A549 (cell line): ENCODE measurements at regions of chr16 and their contacts with region 1.

Region 1: DNA sequence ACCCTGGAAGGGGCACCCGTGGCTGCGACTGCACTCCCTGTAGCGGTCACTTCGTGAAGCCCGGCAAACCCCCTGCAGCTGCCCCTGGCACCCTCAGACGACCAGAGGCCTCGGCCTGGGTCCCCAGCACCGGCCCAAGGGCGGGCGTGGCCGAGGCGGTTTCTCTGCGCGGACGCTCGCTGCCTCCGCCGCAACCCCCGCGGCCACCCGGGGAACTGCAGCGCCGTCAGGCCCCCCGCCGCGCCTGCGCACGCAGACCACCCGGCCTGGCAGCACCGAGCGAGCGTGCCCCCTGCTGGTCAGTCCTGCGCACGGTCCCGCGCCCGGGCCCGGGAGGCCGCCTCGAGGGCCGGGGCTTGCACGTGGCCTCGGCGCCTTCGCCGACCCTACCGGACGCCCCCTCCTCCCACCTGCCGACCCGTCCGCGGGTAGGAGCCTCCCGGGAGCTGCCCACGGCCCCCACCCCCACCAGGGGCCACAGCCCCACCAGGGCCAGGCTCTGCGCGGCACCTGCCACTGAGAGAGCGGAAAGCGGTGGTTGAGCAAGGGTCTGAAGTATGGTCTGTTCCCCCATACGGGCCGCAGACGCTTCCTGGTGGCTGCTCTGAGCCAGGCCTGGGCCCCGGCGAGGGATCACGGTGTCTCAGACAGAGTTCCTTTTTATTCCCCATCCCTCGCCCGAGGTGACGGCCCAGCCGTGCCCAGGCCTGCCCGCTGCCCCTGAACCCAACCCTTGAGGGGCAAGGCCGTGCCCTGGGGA is 11.5 kb upstream of the HS3ST6 start:
- DNase-seq: peak; percentile 82 to 88
- ATAC-seq: peak; percentile 82 to 84
- H3K4me3 ChIP-seq: peak overlapping the region; percentile 65
- H3K27ac ChIP-seq: peak overlapping the region; percentile 98 to 99
- H3K4me1 ChIP-seq: peaks cover 40% of the 10 kb centered on the region
- CTCF ChIP-seq: peak; percentile 97
- EP300 ChIP-seq: no peak
- POLR2A ChIP-seq: peak; percentile 39; the same call in 1 of the 2 replicates
- RAD21 ChIP-seq: peak; percentile 87 to 99

Region 2: GRCh38 chr16:1845985-1846384 is 83.8 kb before region 1 on chr16:
- CTCF ChIA-PET with region 1: interaction called, 43 read pairs
- POLR2A ChIA-PET with region 1: no interaction called
- DNase-seq: no peak
- ATAC-seq: no peak
- H3K4me3 ChIP-seq: no peak overlapping the region
- H3K27ac ChIP-seq: no peak overlapping the region
- H3K4me1 ChIP-seq: no peaks in the 10 kb centered on the region
- CTCF ChIP-seq: no peak
- EP300 ChIP-seq: no peak
- POLR2A ChIP-seq: no peak
- RAD21 ChIP-seq: no peak

Region 3: DNA sequence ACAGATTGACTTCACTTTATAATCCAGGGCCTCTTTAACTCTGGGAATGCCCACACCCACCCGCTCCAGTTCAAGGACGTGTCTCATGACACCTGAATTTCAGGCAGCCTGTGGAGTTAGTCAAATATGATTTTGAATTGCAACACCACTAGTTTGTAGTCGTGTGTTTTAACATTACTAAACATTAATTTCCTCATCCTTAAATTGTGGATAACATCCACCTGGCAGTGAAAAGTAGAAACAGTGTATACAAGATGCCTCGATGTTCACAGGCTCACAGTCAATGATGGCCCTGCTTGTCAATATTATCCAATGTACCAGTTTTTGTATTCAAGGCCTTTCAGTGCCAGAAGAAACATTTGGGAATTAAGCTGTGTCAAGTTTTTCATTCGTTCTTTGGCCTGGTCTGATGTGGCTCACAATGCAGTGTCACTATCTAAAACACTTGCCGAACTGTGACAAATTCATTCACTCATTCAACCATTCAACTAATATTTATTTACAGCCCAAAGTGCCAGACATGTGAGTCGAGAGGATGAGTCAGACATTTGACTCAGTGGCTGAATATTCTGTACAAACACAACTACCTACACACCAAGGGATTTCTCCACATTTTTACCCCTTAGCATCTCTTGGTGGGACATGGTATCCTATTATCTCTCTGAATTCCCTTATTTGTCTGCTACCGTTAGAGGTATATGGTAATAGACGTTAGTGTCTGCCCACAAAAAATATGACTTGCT is 59.2 kb before region 1 on chr16:
- CTCF ChIA-PET with region 1: interaction called, 396 read pairs
- POLR2A ChIA-PET with region 1: interaction called, 11 read pairs
- DNase-seq: peak; percentile 60 to 95
- ATAC-seq: peak; percentile 88 to 94
- H3K4me3 ChIP-seq: peak overlapping the region; percentile 7; the same call in 1 of the 3 replicates
- H3K27ac ChIP-seq: peak overlapping the region; percentile 75 to 88
- H3K4me1 ChIP-seq: peaks cover 44% of the 10 kb centered on the region
- CTCF ChIP-seq: no peak
- EP300 ChIP-seq: peak; percentile 45 to 60; a peak in 2 of 5 replicates
- POLR2A ChIP-seq: no peak
- RAD21 ChIP-seq: no peak

Region 4: GRCh38 chr16:1899641-1900451 is 29.9 kb before region 1 on chr16:
- CTCF ChIA-PET with region 1: interaction called, 14 read pairs
- POLR2A ChIA-PET with region 1: interaction called, 3 read pairs
- DNase-seq: no peak
- ATAC-seq: no peak
- H3K4me3 ChIP-seq: no peak overlapping the region
- H3K27ac ChIP-seq: no peak overlapping the region
- H3K4me1 ChIP-seq: no peaks in the 10 kb centered on the region
- CTCF ChIP-seq: no peak
- EP300 ChIP-seq: no peak
- POLR2A ChIP-seq: no peak
- RAD21 ChIP-seq: no peak

Region 5: DNA sequence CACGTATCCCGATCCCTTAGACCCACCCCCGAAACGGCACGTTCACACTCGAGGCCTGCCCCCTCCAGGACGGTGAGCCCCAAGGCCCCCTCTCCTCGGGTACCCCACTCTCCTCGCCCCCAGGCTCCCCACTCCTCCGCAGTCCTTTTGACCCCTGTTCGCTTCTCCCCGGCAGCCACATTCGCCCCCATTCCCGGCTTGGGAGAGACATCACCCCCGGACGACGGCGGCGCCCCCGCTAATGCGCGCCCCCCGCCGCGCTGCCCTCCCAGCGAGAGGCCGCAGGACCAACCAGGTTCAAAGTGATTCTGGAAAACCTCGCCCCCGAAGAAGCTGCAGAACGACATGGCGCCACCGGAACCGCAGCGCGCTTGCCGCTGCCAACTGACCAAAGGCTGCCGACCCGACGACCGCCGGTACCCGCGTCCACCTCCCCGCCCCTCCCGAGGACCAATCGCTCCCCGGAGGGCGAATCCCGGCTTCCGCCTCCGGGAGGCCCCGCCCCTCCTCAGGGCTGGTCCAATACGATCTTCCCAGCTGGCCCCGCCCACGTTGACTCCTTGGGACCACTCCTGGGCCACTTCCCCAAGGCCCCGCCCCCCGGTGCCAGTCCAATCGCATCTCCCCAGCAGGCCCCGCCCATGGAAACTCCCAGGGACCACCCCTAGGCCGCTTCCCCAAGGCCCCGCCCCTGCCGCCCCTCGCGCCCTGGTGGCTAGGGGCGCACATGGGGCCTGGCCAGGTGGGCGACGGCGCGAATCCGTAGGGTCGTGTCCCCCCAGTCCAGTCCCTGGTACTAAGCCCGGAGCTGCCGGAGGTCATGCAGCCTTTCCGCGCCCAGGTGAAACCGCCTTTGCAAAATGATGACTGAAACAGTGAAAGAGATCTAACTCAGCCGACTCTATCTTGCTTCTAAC is 13.3 kb after region 1 on chr16 and contains the start of gene MSRB1:
- CTCF ChIA-PET with region 1: interaction called, 63 read pairs
- POLR2A ChIA-PET with region 1: interaction called, 3 read pairs
- DNase-seq: peak; percentile 97 to 98
- ATAC-seq: peak; percentile 84 to 93
- H3K4me3 ChIP-seq: peak within 1 kb of the TSS; percentile 84
- H3K27ac ChIP-seq: peak within 1 kb of the TSS; percentile 79 to 92
- H3K4me1 ChIP-seq: peaks cover 19% of the 10 kb centered on the region
- CTCF ChIP-seq: no peak
- EP300 ChIP-seq: no peak
- POLR2A ChIP-seq: peak; percentile 90
- RAD21 ChIP-seq: no peak
- polyA plus RNA-seq, gene MSRB1: 27.7 and 34.4 TPM in 2 replicates